Activated CD4-positive, alpha-beta T cell treated with anti-CD3 and anti-CD28 coated beads for 36 hours (primary cell): ENCODE measurements at regions of chr14 and their contacts with region 1.

Region 1: GRCh38 chr14:68232300-68233055 is 412.9 kb downstream of the RAD51B start:
- DNase-seq: peak; percentile 62
- ATAC-seq: peak; percentile 83
- H3K4me3 Mint-ChIP-seq: no peak overlapping the region
- H3K27ac Mint-ChIP-seq: no peak overlapping the region
- H3K4me1 Mint-ChIP-seq: peaks cover 23% of the 10 kb centered on the region
- H3K27me3 Mint-ChIP-seq: no peaks in the 10 kb centered on the region

Region 2: DNA sequence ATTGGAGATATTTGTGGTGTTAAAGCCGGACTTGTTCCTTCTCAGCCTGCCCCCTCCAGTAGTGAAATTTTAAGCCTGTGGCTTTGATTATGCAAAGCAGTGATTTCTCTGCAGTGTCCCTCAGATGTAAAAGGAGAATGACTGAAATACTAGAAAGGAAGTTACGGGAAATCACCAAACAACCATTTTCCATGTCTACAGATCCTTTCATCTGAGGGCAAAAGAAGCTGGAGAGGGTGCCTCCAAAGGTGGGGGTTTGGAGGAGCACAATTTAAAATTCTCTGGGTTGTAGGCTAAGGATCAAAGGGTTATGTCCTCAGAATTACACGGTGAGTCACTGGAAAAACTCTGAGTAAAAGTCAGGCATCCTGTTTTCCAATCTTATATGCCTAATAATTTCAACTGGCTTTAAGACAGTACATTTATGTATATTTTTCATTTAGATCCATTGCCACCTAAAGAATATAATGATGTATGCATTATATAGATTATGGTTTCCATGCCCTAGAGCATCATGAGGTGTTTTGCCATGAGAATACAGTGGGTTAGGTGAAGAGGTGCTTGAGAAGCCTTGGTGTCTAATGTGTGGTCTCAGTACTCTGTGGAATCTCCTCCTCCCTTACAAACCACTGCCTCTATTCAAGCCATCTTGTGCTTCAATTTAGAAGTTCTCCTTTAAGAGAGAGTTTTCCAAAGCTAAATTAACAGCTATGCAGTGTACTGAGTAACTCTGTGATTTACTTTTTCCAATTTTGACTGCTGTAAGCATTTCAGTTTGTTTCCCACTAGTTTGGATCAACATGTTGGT is 50.8 kb before region 1 on chr14:
- CTCF ChIA-PET with region 1: no interaction called
- POLR2A ChIA-PET with region 1: no interaction called
- intact Hi-C with region 1: loop called in 1 of 2 experiments (anchors 1 kb)
- DNase-seq: no peak
- ATAC-seq: peak; percentile 31
- H3K4me3 Mint-ChIP-seq: no peak overlapping the region
- H3K27ac Mint-ChIP-seq: no peak overlapping the region
- H3K4me1 Mint-ChIP-seq: peaks cover 31% of the 10 kb centered on the region
- H3K27me3 Mint-ChIP-seq: no peaks in the 10 kb centered on the region